ENCODE measurements at regions of chr11 and their contacts with region 1.

Region 1: GRCh38 chr11:129331871-129332274 is 43.8 kb upstream of the BARX2 start:
- DNase-seq: peak; percentile 89
- H3K4me3 ChIP-seq: no peak overlapping the region
- H3K27ac ChIP-seq: no peak overlapping the region
- H3K4me1 ChIP-seq: peaks cover 0 to 6% (median 0%) of the 10 kb centered on the region in 4 donors
- H3K27me3 ChIP-seq: no peaks in the 10 kb centered on the region
- CTCF ChIP-seq: peak; percentile 56 to 81 (median 78)
- EP300 ChIP-seq: no peak
- POLR2A ChIP-seq: no peak

Region 2: GRCh38 chr11:129117595-129118350 is 214.1 kb before region 1 on chr11:
- intact Hi-C with region 1: loop called (anchors 1 kb)
- DNase-seq: no peak
- H3K4me3 ChIP-seq: no peak overlapping the region
- H3K27ac ChIP-seq: no peak overlapping the region
- H3K4me1 ChIP-seq: peaks cover 0 to 14% (median 7%) of the 10 kb centered on the region in 4 donors
- H3K27me3 ChIP-seq: no peaks in the 10 kb centered on the region
- CTCF ChIP-seq: peak; percentile 47 to 84 (median 76)
- EP300 ChIP-seq: no peak
- POLR2A ChIP-seq: no peak

Region 3: DNA sequence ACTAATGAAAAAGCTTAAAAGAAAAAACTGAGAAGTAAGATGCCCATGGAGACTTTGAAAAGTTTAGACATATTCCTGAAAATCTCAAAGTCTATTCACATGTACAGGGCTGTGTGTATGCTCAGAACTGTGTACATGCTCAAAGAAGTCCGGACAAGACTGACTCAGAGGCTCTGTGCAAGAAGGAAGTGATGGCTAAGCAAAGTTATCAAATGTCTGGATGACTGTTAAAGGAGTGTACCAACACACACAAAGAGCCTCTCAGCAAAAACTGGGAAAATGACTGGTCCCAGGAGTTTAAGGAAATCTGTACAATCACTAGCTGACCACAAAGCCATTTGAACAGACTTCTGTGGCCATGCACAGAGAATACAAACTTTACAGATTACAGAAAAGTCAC is 106.7 kb before region 1 on chr11:
- intact Hi-C with region 1: loop called (anchors 5 kb)
- DNase-seq: no peak
- H3K4me3 ChIP-seq: no peak overlapping the region
- H3K27ac ChIP-seq: no peak overlapping the region
- H3K4me1 ChIP-seq: peaks cover 0 to 15% (median 8%) of the 10 kb centered on the region in 4 donors
- H3K27me3 ChIP-seq: no peaks in the 10 kb centered on the region
- CTCF ChIP-seq: no peak
- EP300 ChIP-seq: no peak
- POLR2A ChIP-seq: no peak

Region 4: DNA sequence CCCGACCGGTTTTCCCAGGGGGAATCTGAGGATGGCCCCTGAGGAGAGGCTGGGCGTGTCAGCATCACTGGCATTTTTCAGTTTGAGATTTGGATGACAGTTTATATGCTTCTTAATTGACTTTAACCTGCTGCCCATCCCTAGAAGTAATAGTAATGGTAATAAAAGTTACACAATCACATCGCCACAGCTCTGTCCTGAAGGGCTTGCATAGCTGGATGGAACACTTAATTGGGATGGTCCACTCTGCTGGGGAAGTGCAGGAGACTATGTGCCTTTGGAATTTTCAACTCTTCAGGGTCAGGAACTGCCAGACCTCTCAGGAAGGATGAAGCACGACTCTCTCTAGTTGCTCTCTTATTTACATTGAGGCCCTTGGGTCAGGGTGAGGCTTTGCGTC is 59.9 kb after region 1 on chr11:
- intact Hi-C with region 1: no loop called
- DNase-seq: no peak
- H3K4me3 ChIP-seq: no peak overlapping the region
- H3K27ac ChIP-seq: no peak overlapping the region
- H3K4me1 ChIP-seq: no peaks in the 10 kb centered on the region
- H3K27me3 ChIP-seq: peaks cover 0 to 55% (median 4%) of the 10 kb centered on the region in 3 donors
- CTCF ChIP-seq: no peak
- EP300 ChIP-seq: no peak
- POLR2A ChIP-seq: no peak